Caco-2 (cell line): ENCODE measurements at regions of chr7 and their contacts with region 1.

Region 1: GRCh38 chr7:99232082-99232770 is 24.3 kb upstream of the KPNA7 start:
- DNase-seq: no peak
- H3K4me3 ChIP-seq: no peak overlapping the region
- H3K4me3 Mint-ChIP-seq: no peak overlapping the region
- H3K27ac Mint-ChIP-seq: no peak overlapping the region
- H3K4me1 ChIP-seq: no peaks in the 10 kb centered on the region
- H3K4me1 Mint-ChIP-seq: no peaks in the 10 kb centered on the region
- H3K27me3 ChIP-seq: no peaks in the 10 kb centered on the region
- H3K27me3 Mint-ChIP-seq: no peaks in the 10 kb centered on the region
- CTCF ChIP-seq: no peak

Region 2: DNA sequence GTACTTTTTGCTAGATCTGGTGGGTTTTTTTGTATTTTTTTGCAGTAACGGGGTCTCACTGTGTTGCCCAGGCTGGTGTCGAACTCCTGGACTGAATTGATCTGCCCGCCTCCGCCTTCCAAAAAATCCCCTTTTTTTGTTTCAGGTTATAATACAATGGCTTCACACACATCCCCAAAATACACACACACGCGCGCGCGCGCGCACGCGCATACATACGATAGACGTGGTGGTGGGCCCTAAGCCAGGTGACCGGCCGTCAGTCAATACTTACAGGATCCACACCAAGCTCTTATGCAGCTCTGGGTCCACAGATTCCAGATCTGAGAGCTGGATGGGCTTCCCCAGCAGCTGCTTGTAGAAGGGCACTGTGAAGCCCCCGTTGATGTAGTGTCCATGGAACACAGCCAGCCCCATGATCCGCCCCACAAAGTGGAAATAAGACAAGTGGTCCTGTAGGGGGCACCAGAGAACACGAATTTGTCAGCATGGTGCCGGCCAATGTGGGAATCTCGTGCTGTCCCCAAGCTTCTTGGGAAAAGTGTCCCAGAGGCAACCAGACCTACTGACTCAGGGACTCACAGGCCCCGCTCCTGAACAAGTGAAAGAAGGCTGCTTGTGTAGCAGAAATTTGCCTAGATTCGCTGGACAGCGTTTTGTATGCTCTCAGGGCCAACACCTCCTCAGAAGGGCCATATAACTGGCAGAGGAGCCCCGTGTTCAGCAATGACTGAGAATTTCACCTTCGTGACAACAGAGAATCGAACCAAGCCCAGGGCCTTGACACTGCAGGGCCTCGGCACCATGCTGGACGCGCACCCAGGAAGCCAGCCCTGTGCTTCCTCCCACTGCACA is 191.9 kb before region 1 on chr7:
- CTCF ChIA-PET with region 1: no interaction called
- POLR2A ChIA-PET with region 1: no interaction called
- intact Hi-C with region 1: loop called (anchors 5 kb)
- DNase-seq: peak; percentile 82 to 86
- H3K4me3 ChIP-seq: no peak overlapping the region
- H3K4me3 Mint-ChIP-seq: no peak overlapping the region
- H3K27ac Mint-ChIP-seq: peak overlapping the region; percentile 87
- H3K4me1 ChIP-seq: no peaks in the 10 kb centered on the region
- H3K4me1 Mint-ChIP-seq: peaks cover 13% of the 10 kb centered on the region
- H3K27me3 ChIP-seq: no peaks in the 10 kb centered on the region
- H3K27me3 Mint-ChIP-seq: no peaks in the 10 kb centered on the region
- CTCF ChIP-seq: peak; percentile 62 to 76